GM12878 (cell line): ENCODE measurements at regions of chr7 and their contacts with region 1.

Region 1: DNA sequence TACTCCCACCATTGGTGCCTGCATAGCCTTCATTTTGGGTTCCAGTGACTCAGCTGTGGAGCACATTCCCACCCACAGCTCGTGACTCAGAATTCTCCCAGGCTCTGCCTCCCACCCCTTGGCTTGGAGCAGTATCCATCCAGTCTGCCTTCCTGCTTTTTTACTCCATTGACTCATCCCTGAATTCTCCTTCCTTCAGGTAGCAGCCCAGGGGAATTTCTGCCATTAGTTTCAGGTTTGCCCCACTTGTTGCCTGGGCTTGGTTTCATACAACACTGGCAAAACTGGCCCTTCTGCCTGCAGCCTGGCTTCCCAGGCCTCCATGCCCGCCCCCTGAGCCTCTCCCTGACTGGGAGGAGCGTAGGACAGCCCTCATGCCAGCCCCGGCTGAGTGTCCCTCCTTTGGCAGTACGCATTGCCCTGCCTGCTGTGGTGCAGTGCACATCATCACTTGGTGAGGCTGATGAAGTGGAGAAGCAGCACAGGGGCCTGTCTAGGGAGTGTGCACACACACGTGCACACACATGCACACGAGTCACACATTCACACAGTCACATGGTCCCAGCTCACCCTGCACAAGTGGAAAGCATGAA is 55.0 kb downstream of the SNX10 start:
- DNase-seq: no peak
- ATAC-seq: peak; percentile 35
- H3K4me3 ChIP-seq: no peak overlapping the region
- H3K27ac ChIP-seq: no peak overlapping the region
- H3K4me1 ChIP-seq: peaks cover 14% of the 10 kb centered on the region
- H3K27me3 ChIP-seq: no peaks in the 10 kb centered on the region
- CTCF ChIP-seq: no peak
- EP300 ChIP-seq: no peak
- POLR2A ChIP-seq: no peak
- RAD21 ChIP-seq: no peak

Region 2: GRCh38 chr7:25619963-25620799 is 726.5 kb before region 1 on chr7:
- CTCF ChIA-PET with region 1: no interaction called
- POLR2A ChIA-PET with region 1: no interaction called
- RAD21 ChIA-PET with region 1: no interaction called
- SMC1A ChIA-PET with region 1: no interaction called
- in situ Hi-C with region 1: no loop called
- intact Hi-C with region 1: no loop called
- DNase-seq: no peak
- ATAC-seq: no peak
- H3K4me3 ChIP-seq: no peak overlapping the region
- H3K27ac ChIP-seq: no peak overlapping the region
- H3K4me1 ChIP-seq: no peaks in the 10 kb centered on the region
- H3K27me3 ChIP-seq: no peaks in the 10 kb centered on the region; a peak in 1 of 4 replicates
- CTCF ChIP-seq: no peak
- EP300 ChIP-seq: no peak
- POLR2A ChIP-seq: no peak
- RAD21 ChIP-seq: no peak

Region 3: DNA sequence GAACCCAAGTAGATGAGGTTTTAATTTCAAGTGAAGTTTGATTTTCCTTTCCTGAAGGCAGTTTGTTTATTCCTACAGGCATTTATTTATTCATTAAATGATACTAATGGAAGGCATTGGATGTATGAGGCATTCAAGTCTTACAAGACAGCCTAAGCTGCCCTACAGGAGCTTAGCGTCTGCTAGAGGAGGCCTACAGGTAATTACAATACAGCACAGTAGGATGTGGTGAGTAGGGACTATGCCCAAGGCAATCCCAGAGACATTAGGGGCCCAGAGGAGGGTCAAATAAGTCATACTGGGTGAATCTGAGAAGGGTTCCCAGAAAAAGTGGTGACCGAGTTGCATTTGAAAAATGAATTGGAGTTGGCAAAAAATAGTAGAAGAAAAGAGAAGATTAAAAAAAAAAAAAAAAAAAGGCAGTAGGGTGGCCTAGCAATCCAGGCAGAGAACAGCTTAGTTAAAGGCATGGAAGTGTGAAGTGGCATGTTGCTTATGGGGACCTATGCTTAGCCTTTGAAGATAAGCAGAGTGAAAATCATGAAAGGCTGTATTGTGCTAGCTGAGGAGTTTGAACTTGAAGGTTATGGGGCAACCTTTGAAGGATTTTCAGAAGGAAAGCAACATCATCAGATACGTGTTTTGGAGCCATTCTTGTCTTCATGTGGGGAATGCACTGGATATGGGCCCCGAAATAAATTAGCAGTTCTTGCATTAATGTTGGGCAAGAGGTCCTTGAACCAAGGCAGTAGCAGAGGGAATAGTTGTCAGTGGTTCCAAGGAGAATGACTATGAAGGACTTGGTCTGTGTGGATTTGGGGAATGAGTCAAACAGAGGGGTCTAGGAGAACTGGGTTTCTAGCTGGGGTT is 10.5 kb after region 1 on chr7:
- CTCF ChIA-PET with region 1: interaction called, 10 read pairs
- POLR2A ChIA-PET with region 1: interaction called, 3 read pairs
- RAD21 ChIA-PET with region 1: interaction called, 41 read pairs
- SMC1A ChIA-PET with region 1: interaction called, 48 read pairs
- in situ Hi-C with region 1: no loop called
- intact Hi-C with region 1: no loop called
- DNase-seq: no peak
- ATAC-seq: no peak
- H3K4me3 ChIP-seq: no peak overlapping the region
- H3K27ac ChIP-seq: no peak overlapping the region
- H3K4me1 ChIP-seq: peaks cover 3% of the 10 kb centered on the region; the same call in 1 of the 2 replicates
- H3K27me3 ChIP-seq: no peaks in the 10 kb centered on the region
- CTCF ChIP-seq: no peak
- EP300 ChIP-seq: no peak
- POLR2A ChIP-seq: no peak
- RAD21 ChIP-seq: no peak

Region 4: DNA sequence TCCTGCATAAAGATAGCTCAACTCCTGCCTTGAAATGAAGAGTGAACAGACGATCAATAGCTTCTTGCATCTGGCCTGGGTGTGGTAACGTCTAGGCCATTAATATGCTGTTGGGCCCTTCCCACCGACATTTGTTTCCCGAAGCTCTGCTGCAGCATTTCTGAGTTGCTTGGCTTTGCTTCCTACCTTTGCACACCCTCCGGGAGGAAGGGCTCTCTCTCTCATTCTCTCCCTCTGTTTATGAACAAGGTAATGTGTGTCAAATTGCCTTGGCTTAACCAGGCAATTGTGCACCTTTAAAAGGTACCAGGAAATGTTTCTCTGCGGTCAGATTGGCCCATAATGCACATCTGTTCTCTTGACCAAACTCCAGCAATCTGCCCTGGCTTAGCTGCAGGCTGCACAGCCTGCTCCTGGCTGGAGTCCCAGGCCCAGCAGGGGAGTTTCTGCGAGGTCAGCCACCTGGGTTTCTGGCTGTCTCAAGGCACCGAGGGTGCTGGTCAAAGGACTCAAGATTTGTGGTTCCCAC is 168.7 kb after region 1 on chr7:
- CTCF ChIA-PET with region 1: no interaction called
- POLR2A ChIA-PET with region 1: no interaction called
- RAD21 ChIA-PET with region 1: no interaction called
- SMC1A ChIA-PET with region 1: no interaction called
- in situ Hi-C with region 1: no loop called
- intact Hi-C with region 1: no loop called
- DNase-seq: no peak
- ATAC-seq: no peak
- H3K4me3 ChIP-seq: no peak overlapping the region
- H3K27ac ChIP-seq: no peak overlapping the region
- H3K4me1 ChIP-seq: no peaks in the 10 kb centered on the region
- H3K27me3 ChIP-seq: no peaks in the 10 kb centered on the region; a peak in 1 of 4 replicates
- CTCF ChIP-seq: no peak
- EP300 ChIP-seq: no peak
- POLR2A ChIP-seq: no peak
- RAD21 ChIP-seq: no peak